GM23248 (cell line): ENCODE measurements at regions of chrX and their contacts with region 1.

Region 1: GRCh38 chrX:109485470-109486340 is 3.8 kb upstream of the GUCY2F start:
- DNase-seq: peak; percentile 69
- H3K4me3 ChIP-seq: no peak overlapping the region
- H3K27ac ChIP-seq: no peak overlapping the region
- H3K4me1 ChIP-seq: no peaks in the 10 kb centered on the region
- H3K27me3 ChIP-seq: no peaks in the 10 kb centered on the region

Region 2: GRCh38 chrX:109635176-109635575 is 149.5 kb after region 1 on chrX:
- in situ Hi-C with region 1: loop called (anchors 10 kb)
- DNase-seq: peak; percentile 36
- H3K4me3 ChIP-seq: no peak overlapping the region
- H3K27ac ChIP-seq: no peak overlapping the region
- H3K4me1 ChIP-seq: no peaks in the 10 kb centered on the region
- H3K27me3 ChIP-seq: no peaks in the 10 kb centered on the region

Region 3: DNA sequence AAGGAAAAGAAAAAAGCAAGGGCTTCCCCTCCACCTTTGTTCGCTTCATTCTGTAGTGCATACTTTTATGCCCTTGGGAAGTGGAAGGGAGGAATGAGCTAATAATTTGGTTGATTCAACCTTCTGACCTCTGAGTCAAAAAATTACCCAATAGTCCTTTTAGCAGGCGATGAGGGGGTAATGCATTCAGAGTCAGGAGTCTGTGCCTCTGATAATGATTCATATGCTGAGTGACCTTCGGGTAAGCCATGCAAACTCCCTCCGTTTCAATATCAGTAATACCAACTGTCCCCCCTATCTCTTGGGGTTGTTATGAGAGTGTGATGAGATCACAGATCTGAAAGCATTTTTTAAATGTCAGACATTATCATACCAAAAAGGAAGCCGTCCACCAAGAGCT is 289.0 kb after region 1 on chrX:
- in situ Hi-C with region 1: no loop called
- DNase-seq: peak; percentile 84
- H3K4me3 ChIP-seq: peak overlapping the region; percentile 42; the same call in 1 of the 2 replicates
- H3K27ac ChIP-seq: peak overlapping the region; percentile 53
- H3K4me1 ChIP-seq: peaks cover 10% of the 10 kb centered on the region
- H3K27me3 ChIP-seq: no peaks in the 10 kb centered on the region

Region 4: GRCh38 chrX:109886122-109886761 is 400.5 kb after region 1 on chrX:
- in situ Hi-C with region 1: loop called (anchors 10 kb)
- DNase-seq: peak; percentile 62
- H3K4me3 ChIP-seq: no peak overlapping the region
- H3K27ac ChIP-seq: no peak overlapping the region
- H3K4me1 ChIP-seq: no peaks in the 10 kb centered on the region
- H3K27me3 ChIP-seq: no peaks in the 10 kb centered on the region